ENCODE measurements at regions of chr6 and their contacts with region 1.

Region 1: GRCh38 chr6:3162565-3163247 is 5.4 kb upstream of the TUBB2A start:
- DNase-seq: peak; percentile 67 to 86 (median 78)
- ATAC-seq: peak; percentile 51 to 85 (median 82)
- H3K4me3 ChIP-seq: peak overlapping the region; percentile 14 to 88 (median 76)
- H3K27ac ChIP-seq: peak overlapping the region; percentile 74 to 97 (median 90)
- H3K4me1 ChIP-seq: peaks cover 0 to 49% (median 11%) of the 10 kb centered on the region in 12 donors
- H3K27me3 ChIP-seq: no peaks in the 10 kb centered on the region
- CTCF ChIP-seq: peak in 5 of 12 donors; percentile 19 to 37 (median 24)
- POLR2A ChIP-seq: peak in 1 of 2 donors; percentile 62

Region 2: DNA sequence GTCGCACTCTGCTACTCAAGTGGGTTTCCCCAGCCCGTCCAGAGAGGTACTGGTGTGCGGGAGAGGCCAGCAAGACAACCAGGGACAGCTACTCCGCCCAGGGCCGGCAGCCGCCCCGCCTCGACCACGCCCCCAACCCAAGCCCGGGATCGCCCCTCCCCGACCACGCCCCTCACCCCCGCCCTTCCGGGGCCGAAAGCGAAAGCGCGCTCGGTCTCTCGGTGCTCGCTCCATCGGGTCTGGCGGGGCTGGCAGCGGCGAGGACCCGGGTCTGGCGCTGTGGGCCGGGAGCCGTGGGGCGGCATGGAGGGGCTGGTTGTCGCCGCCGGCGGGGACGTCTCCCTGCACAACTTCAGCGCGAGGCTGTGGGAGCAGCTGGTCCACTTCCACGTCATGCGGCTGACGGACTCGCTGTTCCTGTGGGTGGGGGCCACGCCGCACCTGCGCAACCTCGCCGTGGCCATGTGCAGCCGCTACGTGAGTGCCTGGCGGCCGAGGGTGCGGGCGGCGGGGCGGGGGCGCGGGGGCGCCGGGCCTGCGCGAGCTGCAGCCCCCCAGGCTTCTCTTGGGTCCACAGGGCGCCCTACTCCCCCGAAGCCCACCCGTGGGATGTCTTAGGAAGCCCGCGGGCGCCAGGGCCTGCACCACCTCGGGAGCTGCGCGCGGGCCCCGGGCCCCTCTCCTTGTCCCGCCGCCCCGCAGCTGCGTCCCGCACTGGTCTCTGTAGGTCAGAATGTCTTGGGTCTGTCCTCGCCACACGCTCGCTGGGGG is 96.2 kb after region 1 on chr6 and contains the start of gene PSMG4:
- intact Hi-C with region 1: loop called in 8 of 10 experiments (anchors 2 to 10 kb)
- DNase-seq: peak; percentile 96 to 99 (median 97)
- ATAC-seq: peak; percentile 93 to 98 (median 98)
- H3K4me3 ChIP-seq: peak within 1 kb of the TSS; percentile 60 to 99 (median 94)
- H3K27ac ChIP-seq: peak within 1 kb of the TSS in 11 of 12 donors; percentile 40 to 85 (median 82)
- H3K4me1 ChIP-seq: peaks cover 0 to 38% (median 18%) of the 10 kb centered on the region in 12 donors
- H3K27me3 ChIP-seq: no peaks in the 10 kb centered on the region
- CTCF ChIP-seq: no peak
- POLR2A ChIP-seq: peak in 1 of 2 donors; percentile 60
- total RNA-seq, gene PSMG4: 6.2 to 12.6 (median 9.7) TPM

Region 3: DNA sequence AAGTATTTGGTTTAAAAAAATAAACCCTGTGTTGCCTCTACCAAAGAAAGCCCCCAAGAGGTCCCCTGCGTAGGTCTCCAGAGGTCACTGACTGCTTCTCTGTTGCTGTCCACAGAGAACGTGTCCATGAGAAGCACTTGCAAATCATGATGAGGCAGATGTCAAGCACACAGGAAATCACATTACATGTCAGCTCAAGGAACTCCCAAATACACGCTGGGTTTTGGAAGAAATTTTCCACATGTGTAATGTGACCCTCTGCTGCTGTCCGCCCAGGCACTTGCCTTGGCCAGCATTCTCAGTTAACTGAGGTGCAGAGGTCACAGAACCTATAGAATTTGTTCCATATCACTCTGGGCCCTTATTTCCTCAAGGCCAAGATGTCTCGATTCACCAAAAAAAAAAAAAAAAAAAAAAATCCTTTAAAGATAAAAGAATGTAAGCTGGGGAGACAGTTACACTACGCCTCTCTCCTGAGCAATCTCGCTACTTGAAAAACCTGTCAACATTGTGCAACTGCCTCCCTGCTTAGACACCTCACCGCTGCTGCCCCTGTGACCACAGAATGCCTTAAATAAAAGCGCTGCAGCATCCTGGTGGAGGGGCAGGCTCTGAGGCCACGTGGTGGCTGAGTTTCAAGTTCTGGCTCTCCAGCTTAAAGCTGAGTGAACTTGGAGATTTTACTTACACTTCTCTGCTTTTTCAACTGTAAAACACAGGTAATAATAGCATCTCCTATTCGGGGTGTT is 251.8 kb after region 1 on chr6:
- intact Hi-C with region 1: no loop called
- DNase-seq: no peak
- ATAC-seq: no peak
- H3K4me3 ChIP-seq: no peak overlapping the region
- H3K27ac ChIP-seq: no peak overlapping the region
- H3K4me1 ChIP-seq: no peaks in the 10 kb centered on the region
- H3K27me3 ChIP-seq: no peaks in the 10 kb centered on the region
- CTCF ChIP-seq: no peak
- POLR2A ChIP-seq: no peak

Region 4: DNA sequence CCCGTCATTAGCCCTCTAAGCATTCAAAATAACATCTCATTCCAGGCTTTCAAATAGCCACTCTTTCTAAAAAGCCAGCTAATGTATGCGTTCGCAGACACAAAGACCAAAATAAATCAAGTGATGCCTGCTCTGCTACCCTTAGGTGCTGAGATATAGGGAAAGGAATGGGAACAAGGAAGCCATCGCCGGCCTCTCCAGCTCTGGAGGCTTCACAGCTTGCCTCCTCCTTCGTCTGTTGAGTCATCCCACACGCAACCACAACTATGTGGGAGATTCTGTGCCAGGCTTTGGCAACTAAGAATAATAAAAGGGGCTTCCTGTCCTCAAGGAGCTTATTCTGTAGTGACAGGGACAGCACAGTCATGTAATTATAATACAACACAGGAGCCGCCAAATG is 321.5 kb after region 1 on chr6:
- intact Hi-C with region 1: no loop called
- DNase-seq: no peak
- ATAC-seq: no peak
- H3K4me3 ChIP-seq: no peak overlapping the region
- H3K27ac ChIP-seq: no peak overlapping the region
- H3K4me1 ChIP-seq: no peaks in the 10 kb centered on the region
- H3K27me3 ChIP-seq: peaks cover 0 to 33% (median 0%) of the 10 kb centered on the region in 9 donors
- CTCF ChIP-seq: no peak
- POLR2A ChIP-seq: no peak

Measured in heart left ventricle (tissue), 16 donors.